IMR-90 (cell line): ENCODE measurements at regions of chr19 and their contacts with region 1.

Region 1: DNA sequence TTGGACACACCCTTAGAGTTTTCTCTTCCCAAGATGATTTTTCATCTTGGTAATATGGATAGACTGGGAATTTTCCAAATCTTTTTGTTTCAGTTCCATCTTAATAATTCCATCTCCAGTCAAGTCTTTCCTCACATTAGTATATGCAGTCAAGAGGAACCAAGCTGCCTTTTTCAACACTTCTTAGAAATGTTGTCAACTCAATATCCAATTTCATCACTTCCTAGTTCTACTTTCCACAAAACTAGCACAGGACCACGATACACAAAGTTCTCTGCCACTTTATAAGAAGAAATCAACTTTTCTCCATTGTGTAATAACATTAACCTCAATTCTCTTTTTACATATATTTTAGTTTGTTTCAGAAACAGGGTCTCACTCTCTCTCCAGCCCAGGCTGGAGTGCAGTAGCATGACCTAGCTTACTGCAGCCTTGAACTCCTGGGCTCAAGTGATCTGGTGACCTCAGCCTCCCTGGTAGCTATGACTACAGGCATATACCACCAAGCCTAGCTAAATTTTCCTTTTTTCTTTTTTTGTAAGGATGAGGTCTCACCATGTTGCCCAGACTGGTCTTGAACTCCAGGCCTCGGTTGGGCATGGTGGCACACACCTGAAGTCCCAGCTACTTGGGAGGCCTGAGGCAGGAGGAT is 15.5 kb downstream of the ZNF443 start:
- DNase-seq: no peak
- ATAC-seq: no peak
- H3K4me3 ChIP-seq: no peak overlapping the region
- H3K27ac ChIP-seq: no peak overlapping the region
- H3K4me1 ChIP-seq: no peaks in the 10 kb centered on the region
- H3K27me3 ChIP-seq: no peaks in the 10 kb centered on the region
- CTCF ChIP-seq: no peak
- POLR2A ChIP-seq: no peak
- RAD21 ChIP-seq: no peak

Region 2: DNA sequence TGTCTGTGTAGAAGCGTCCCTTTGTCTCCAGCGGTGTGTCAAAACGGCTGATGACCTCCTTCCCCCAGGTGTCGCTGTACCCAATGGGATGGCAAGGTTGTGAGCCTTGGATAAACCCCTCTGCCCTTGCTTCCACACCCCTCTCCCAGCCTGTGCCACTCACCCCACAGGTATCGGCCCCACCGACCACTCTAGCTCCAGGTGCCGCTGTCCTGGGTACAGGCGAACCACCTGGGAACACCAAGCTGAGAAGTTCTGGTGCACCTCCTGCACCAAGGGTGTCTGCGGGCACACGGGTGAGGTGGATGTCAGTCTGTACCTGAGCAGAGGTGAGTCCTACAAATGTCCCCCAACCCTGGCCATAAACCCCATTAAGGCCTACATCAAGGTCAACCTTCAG is 224.6 kb after region 1 on chr19:
- CTCF ChIA-PET with region 1: no interaction called
- POLR2A ChIA-PET with region 1: interaction called, 15 read pairs
- dilution Hi-C with region 1: no loop called
- in situ Hi-C with region 1: no loop called
- intact Hi-C with region 1: no loop called
- DNase-seq: no peak
- ATAC-seq: no peak
- H3K4me3 ChIP-seq: no peak overlapping the region
- H3K27ac ChIP-seq: no peak overlapping the region
- H3K4me1 ChIP-seq: 0 out of 2 replicates have a peak, but pooled peaks cover 2% of the 10 kb centered on the region
- H3K27me3 ChIP-seq: no peaks in the 10 kb centered on the region
- CTCF ChIP-seq: no peak
- POLR2A ChIP-seq: no peak
- RAD21 ChIP-seq: no peak